ENCODE measurements at regions of chr5 and their contacts with region 1.

Region 1: GRCh38 chr5:179450961-179451827 is 99.2 kb upstream of the RUFY1 start:
- DNase-seq: no peak
- H3K4me3 Mint-ChIP-seq: no peak overlapping the region
- H3K27ac Mint-ChIP-seq: no peak overlapping the region
- H3K4me1 Mint-ChIP-seq: no peaks in the 10 kb centered on the region
- H3K27me3 Mint-ChIP-seq: no peaks in the 10 kb centered on the region

Region 2: DNA sequence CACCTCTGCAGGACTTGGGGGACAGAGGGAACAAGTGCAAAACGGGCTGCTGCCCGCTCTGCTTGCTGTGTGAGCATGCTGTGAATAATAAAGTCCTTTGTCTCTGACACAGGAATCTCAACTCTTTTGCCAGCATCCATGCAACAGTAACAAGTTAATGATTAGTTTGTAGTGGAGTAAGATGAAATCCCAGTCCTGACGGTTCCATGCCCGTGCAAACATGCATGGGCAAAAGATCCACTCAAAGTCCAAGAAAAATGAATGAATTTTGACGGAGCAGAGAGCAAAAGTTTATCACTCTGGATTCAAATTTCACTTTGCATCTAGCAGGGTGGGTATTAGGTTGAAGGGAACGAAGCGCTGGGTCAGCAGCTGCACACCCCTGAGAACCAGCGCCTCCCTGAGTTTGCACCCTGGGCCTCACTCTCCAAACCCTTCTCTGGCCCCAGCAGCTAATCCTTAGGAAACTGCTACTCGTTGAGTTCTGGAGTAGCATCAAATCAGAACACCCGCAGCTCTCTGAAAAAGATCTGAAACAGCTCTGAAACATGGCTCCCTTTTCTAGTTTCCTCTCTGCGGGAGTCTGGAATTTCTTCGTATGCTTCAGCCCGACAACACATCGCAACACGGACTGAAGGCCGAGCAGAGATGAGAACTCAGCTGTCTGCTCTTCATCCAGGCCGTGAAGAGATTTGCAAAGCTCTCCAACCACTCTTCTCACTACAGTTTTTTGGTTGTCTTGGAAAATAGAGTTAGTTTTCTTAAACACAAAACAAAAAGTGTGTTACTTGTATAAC is 53.6 kb after region 1 on chr5:
- intact Hi-C with region 1: loop called (anchors 5 kb)
- DNase-seq: no peak
- H3K4me3 Mint-ChIP-seq: no peak overlapping the region
- H3K27ac Mint-ChIP-seq: no peak overlapping the region
- H3K4me1 Mint-ChIP-seq: peaks cover 11% of the 10 kb centered on the region
- H3K27me3 Mint-ChIP-seq: no peaks in the 10 kb centered on the region